MCF 10A (cell line): ENCODE measurements at regions of chr7 and their contacts with region 1.

Region 1: DNA sequence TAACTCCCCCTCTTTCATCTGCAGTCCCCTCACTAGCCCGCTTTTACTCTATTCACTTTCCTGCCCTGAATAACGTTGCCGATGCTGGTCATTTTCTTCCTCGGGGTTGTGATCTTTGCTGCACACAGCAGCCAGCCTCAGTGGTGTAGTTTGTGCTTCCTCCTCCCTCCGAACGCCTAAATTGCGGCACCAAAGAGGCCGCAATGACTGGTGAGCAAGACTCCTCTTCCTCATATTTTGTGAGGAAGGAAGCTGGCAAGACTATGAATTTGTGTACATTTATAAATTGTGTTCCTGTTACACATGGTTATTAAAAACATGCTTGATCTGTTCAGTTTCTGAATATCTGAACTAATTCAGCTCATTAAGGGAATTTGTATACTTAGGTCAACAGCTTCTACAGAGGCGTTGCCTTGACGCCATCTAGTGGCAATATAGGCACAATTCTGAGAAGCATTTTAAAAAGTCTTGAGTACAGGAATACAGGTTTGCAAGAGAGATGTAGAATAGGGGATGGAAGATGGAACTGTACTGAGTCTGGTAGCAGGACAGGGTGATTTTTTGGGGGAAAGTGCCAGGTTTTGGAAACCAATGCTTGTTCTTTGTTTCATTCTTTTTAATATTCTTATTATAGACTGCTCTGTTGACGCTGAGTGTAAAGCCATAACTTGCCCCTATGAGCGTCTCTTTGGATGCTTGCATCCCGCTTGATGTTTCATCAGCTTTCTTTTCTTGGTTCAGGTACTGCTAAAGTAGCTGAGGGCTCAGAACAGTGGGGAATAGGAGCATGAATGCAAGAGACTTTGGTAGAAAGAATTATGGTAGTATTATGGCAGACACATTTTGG is 4.1 kb upstream of the TAS2R5 start:
- DNase-seq: peak; percentile 62
- H3K4me3 Mint-ChIP-seq: no peak overlapping the region
- H3K27ac Mint-ChIP-seq: no peak overlapping the region
- H3K4me1 Mint-ChIP-seq: no peaks in the 10 kb centered on the region
- H3K27me3 Mint-ChIP-seq: no peaks in the 10 kb centered on the region
- CTCF ChIP-seq: peak; percentile 54

Region 2: DNA sequence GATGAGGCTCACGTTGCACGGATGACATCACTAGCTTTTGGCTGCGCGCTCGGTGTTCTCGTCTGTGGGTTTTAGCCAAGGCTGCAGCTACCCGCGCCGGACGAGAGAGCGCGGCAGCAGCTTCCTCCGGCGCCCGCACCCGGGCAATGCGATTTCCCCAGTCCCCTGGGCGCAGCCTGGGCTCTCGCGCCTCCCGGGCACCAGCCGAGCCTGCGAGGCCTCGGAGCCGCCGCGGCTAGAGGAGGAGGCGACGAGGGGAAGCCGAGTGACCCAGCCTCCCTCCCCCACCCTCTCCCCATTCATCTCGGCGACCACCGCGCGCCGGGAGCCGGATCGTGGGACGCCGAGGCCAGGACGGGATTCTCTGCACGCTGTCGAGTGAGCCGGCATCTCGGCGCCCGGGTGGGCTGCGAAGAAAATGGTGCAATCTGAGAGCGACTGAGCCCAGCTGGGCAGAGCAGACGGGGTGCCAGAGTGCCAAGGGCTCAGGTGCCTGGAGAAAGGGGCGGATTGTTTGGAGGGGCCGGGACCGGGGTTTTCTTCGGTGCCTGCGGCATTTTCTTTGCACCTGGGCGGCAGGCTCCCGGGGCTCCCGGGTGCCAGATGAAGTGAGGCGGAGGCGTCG is 713.3 kb before region 1 on chr7:
- CTCF ChIA-PET with region 1: no interaction called
- POLR2A ChIA-PET with region 1: no interaction called
- intact Hi-C with region 1: no loop called
- DNase-seq: peak; percentile 60
- H3K4me3 Mint-ChIP-seq: peak overlapping the region; percentile 73
- H3K27ac Mint-ChIP-seq: no peak overlapping the region
- H3K4me1 Mint-ChIP-seq: no peaks in the 10 kb centered on the region
- H3K27me3 Mint-ChIP-seq: peaks cover 45% of the 10 kb centered on the region
- CTCF ChIP-seq: no peak

Region 3: GRCh38 chr7:141754939-141755338 is 31.0 kb before region 1 on chr7:
- CTCF ChIA-PET with region 1: interaction called, 13 read pairs
- POLR2A ChIA-PET with region 1: no interaction called
- intact Hi-C with region 1: no loop called
- DNase-seq: peak; percentile 53
- H3K4me3 Mint-ChIP-seq: no peak overlapping the region
- H3K27ac Mint-ChIP-seq: no peak overlapping the region
- H3K4me1 Mint-ChIP-seq: no peaks in the 10 kb centered on the region
- H3K27me3 Mint-ChIP-seq: no peaks in the 10 kb centered on the region
- CTCF ChIP-seq: peak; percentile 39

Region 4: DNA sequence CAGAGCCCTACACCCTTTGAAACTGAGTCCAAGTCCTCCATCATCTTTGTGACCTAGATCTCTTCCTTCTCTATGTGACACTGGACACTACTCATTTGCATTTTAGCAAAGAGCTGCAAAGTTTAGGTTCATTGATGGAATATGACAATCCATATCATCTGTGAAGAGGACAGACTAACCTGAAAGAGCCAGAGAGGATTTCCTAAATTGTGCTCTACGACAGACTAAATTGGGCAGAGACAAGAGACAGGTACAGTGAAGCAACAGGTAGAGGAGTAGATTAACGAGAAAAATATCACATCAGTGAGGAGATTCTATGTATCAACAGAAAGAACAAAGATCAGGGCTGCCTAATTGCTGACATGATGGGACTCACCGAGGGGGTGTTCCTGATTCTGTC is 22.1 kb before region 1 on chr7 and contains the start of gene TAS2R3:
- CTCF ChIA-PET with region 1: interaction called, 17 read pairs
- POLR2A ChIA-PET with region 1: no interaction called
- intact Hi-C with region 1: no loop called
- DNase-seq: no peak
- H3K4me3 Mint-ChIP-seq: no peak within 1 kb of the TSS
- H3K27ac Mint-ChIP-seq: no peak within 1 kb of the TSS
- H3K4me1 Mint-ChIP-seq: no peaks in the 10 kb centered on the region
- H3K27me3 Mint-ChIP-seq: no peaks in the 10 kb centered on the region
- CTCF ChIP-seq: no peak
- total RNA-seq, gene TAS2R3: 2.7 and 3.1 TPM in 2 replicates

Region 5: DNA sequence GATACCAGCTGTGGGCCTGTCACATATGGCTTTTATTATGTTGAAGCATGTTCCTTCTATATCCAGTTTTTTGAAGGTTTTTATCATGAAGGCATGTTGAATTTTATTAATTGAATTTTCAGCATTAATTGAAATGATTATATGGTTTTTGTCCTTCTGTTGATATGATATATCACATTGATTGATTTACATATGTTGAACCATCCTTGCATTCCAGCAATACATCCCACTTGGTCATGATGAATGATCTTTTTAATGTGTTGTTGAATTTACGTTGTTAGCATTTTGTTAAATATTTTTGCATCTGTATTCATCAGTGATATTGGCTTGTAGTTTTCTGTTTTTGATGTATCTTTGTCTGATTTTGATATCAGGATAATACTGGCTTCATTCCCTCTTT is 34.1 kb after region 1 on chr7:
- CTCF ChIA-PET with region 1: interaction called, 12 read pairs
- POLR2A ChIA-PET with region 1: no interaction called
- intact Hi-C with region 1: no loop called
- DNase-seq: no peak
- H3K4me3 Mint-ChIP-seq: no peak overlapping the region
- H3K27ac Mint-ChIP-seq: no peak overlapping the region
- H3K4me1 Mint-ChIP-seq: no peaks in the 10 kb centered on the region
- H3K27me3 Mint-ChIP-seq: no peaks in the 10 kb centered on the region
- CTCF ChIP-seq: no peak